ENCODE measurements at regions of chr6 and their contacts with region 1.

Region 1: GRCh38 chr6:169831450-169832246 is 80.2 kb downstream of the ERMARD start:
- DNase-seq: peak; percentile 82
- ATAC-seq: peak; percentile 93

Region 2: DNA sequence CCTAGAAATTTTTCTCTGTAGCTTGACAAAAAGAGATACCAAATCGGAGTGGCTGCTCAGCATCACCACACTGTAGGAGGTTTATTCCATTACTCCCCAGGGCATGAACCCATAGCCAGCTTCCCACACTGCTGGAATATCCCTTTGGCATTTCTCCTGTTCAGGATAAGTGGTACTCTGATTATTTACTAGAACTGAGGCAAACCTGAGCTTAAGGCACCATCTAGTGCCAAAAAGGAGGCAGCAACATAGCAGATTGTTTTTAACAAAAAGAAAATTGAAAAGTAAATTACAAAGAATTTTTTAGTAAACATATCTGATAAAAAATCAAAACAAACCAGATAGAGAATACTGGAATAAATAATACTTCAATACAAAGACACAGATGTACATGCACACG is 311.5 kb before region 1 on chr6:
- intact Hi-C with region 1: no loop called
- DNase-seq: no peak
- ATAC-seq: no peak

Region 3: GRCh38 chr6:169921853-169922824 is 90.5 kb after region 1 on chr6:
- intact Hi-C with region 1: loop called (anchors 10 kb)
- DNase-seq: no peak
- ATAC-seq: no peak

Region 4: DNA sequence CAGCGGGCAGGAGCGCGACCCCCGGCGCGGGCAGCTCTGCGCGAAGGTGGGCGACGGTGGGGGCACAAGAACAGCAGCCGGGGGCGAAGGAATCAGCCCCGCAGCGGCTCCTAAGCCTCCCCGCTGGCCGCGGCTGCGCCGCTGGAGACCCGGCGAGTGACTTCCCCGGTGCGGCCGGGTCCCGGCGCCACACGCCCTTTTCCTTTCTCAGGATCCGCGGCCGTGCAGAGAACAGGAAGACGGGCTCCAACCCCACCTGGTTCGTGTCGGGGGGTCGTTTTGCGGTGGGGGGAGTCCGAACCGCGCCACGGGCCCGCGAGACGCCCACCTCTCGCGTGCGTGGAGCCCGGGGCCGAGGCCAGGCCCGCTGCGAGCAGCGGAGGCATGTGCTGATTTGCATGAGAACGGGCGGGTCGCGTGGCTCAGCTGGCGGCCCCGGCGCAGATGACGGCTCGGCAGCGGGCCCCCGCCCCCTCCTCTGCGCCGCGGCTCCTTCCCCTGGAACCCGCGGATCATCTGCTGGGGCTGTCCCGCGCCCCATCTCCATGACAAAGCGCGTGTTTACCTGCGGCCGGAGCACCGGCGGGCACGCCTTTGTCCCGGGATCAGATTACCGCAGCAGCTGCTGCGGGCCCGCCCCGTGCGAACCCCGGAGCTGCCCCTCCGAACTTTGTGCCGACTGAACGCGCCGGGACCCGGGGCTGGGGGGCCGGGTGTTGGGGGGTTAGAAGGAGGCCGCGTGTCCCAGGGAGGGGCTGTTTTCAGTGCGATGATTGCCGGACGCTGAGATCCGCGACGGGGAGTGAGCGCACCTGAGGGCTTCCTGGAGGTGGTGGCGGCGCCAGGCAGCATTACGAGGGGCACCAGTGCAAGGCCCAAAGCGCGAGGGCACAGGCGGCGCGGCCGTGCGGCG is 464.1 kb after region 1 on chr6:
- intact Hi-C with region 1: loop called (anchors 10 kb)
- DNase-seq: no peak
- ATAC-seq: peak; percentile 11

Region 5: DNA sequence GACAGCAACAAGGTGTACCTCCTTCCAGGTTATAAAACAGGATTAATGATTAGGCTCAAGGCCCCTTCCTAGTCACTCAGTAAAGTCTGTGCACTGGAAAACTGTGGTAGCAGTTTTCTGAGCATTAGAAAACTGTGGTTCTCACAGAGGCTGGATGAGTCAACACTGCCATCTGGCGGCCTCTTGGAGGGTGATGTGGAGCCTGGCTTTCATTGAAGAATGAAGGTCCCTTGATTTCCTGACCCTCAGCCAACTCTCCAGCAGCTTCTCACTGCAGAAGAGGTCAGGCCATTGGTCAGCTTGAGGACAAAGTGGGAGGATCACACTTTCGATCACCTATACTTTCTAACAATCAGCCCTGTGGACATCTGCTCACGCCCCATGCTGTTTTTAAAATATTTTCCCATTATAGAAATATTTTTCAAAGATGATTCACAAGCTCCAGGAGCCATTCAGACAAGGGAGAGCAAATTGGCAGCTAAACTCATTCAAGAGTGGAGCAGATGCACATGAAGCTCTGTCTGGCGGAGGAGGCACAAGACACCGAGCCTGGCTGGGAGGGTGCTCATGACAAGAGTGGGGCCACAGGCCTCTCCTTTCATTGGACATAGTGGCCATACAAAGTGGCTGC is 698.3 kb after region 1 on chr6:
- intact Hi-C with region 1: loop called (anchors 5 kb)
- DNase-seq: peak; percentile 84
- ATAC-seq: peak; percentile 85